Endothelial cell of umbilical vein (primary cell): ENCODE measurements at regions of chr7 and their contacts with region 1.

Region 1: GRCh38 chr7:158740013-158740656 is 35.5 kb upstream of the NCAPG2 start:
- DNase-seq: peak; percentile 89
- H3K4me3 ChIP-seq: peak overlapping the region in 1 of 3 experiments; percentile 9
- H3K27ac ChIP-seq: peak overlapping the region; percentile 69
- H3K4me1 ChIP-seq: peaks cover 25% of the 10 kb centered on the region
- H3K27me3 ChIP-seq: no peaks in the 10 kb centered on the region
- CTCF ChIP-seq: no peak
- POLR2A ChIP-seq: no peak

Region 2: GRCh38 chr7:158704704-158705468 is 35.2 kb before region 1 on chr7 and contains the start of gene NCAPG2:
- CTCF ChIA-PET with region 1: interaction called, 9 read pairs
- POLR2A ChIA-PET with region 1: interaction called, 12 read pairs
- dilution Hi-C with region 1: no loop called
- intact Hi-C with region 1: loop called (anchors 1 kb)
- DNase-seq: peak; percentile 98
- H3K4me3 ChIP-seq: peak within 1 kb of the TSS; percentile 87 to 100 (median 89)
- H3K27ac ChIP-seq: peak within 1 kb of the TSS; percentile 78
- H3K4me1 ChIP-seq: peaks cover 24% of the 10 kb centered on the region
- H3K27me3 ChIP-seq: no peaks in the 10 kb centered on the region
- CTCF ChIP-seq: no peak
- POLR2A ChIP-seq: peak; percentile 45
- total RNA-seq, gene NCAPG2: 62.3 and 66.9 TPM in 2 replicates

Region 3: DNA sequence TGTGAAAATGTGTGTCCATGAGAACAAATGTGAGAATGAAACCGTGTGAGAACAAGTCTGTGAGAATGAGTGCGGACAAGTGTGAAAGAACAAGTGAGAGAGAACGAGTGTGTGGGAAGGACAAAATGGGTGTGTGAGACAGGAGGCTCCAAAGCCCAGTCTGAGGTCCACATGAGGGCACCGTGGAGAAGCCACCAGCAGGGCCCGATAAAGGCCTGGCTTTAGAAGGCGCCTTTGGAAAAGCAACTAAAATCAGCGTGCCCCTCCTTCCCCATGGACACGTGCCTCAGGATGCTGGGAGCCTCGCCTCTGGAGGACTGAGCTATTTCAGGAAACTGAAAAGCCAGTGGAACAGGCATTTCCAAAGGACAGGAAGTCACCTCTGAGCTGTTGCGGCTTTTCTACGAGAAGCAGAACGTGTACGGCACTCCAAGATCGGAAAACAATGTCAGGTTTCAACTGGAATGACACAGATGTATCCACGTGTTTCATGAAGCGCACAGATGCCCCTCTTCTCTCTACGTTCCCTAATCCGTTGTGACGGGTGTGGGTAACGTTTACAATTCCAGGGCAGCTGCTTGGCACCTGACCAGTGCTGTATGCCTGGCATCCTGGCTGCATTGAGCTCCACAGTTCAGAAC is 42.7 kb after region 1 on chr7:
- CTCF ChIA-PET with region 1: interaction called, 9 read pairs
- POLR2A ChIA-PET with region 1: no interaction called
- dilution Hi-C with region 1: no loop called
- intact Hi-C with region 1: loop called (anchors 2 kb)
- DNase-seq: peak; percentile 80
- H3K4me3 ChIP-seq: no peak overlapping the region
- H3K27ac ChIP-seq: peak overlapping the region; percentile 4
- H3K4me1 ChIP-seq: peaks cover 12% of the 10 kb centered on the region
- H3K27me3 ChIP-seq: no peaks in the 10 kb centered on the region
- CTCF ChIP-seq: peak; percentile 48 to 53
- POLR2A ChIP-seq: no peak

Region 4: GRCh38 chr7:158818325-158819213 is 78.4 kb after region 1 on chr7:
- CTCF ChIA-PET with region 1: interaction called, 5 read pairs
- POLR2A ChIA-PET with region 1: no interaction called
- dilution Hi-C with region 1: no loop called
- intact Hi-C with region 1: loop called (anchors 1 kb)
- DNase-seq: peak; percentile 98
- H3K4me3 ChIP-seq: peak overlapping the region in 1 of 3 experiments; percentile 55
- H3K27ac ChIP-seq: peak overlapping the region; percentile 95
- H3K4me1 ChIP-seq: peaks cover 62% of the 10 kb centered on the region
- H3K27me3 ChIP-seq: no peaks in the 10 kb centered on the region
- CTCF ChIP-seq: no peak
- POLR2A ChIP-seq: peak; percentile 69

Region 5: DNA sequence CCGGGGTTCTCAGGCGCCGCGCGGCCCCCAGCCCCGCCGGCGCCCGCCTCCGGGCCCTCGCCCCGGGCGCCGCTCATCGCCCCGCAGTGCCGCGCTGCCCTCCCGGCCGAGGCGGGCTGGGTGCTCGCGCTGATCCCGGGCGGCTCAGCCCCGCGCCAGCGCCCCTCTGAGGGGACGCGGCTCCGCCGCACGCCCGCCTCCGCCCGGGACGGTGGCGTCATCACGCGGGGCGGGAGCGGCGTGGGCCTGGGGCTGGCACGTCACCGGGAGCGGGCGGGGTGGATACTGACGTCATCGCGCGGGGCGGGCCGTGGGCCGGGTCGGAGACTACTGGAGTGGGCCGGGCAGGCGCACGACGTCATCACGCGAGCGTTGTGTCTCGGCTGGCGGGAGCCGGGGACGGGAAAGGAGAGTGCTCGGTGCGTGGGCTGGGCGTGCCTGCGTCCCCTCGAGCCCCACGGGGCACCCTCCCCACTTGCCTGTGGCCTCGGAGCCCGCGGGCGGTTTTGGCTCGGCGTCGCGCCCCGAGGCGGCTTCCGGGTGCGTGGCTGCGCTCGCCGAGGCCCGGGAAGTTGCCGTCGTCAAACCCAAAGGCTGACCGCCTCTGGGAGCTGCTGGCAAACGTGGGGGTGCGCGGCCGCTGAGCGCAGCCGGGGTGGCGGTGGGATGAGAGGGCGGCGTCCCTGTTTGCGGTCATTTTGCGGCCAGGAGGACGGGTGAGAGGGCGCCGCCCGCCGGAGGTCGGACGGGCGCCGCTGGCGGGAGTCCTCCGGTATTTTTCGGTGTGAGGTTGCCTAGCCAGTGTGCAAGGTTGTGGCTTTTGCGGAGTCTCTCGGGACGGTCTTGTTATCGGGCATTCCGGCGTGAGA is 89.4 kb after region 1 on chr7 and contains the start of gene ESYT2:
- CTCF ChIA-PET with region 1: interaction called, 7 read pairs
- POLR2A ChIA-PET with region 1: no interaction called
- dilution Hi-C with region 1: no loop called
- intact Hi-C with region 1: loop called (anchors 1 kb)
- DNase-seq: peak; percentile 97
- H3K4me3 ChIP-seq: peak within 1 kb of the TSS; percentile 72 to 99 (median 80)
- H3K27ac ChIP-seq: peak within 1 kb of the TSS; percentile 66
- H3K4me1 ChIP-seq: peaks cover 10% of the 10 kb centered on the region
- H3K27me3 ChIP-seq: peaks cover 0 to 1% of the 10 kb centered on the region in 2 experiments
- CTCF ChIP-seq: peak in 1 of 2 donors; percentile 22
- POLR2A ChIP-seq: peak; percentile 92
- total RNA-seq, gene ESYT2: 40.6 and 46.6 TPM in 2 replicates

Region 6: GRCh38 chr7:158856883-158857668 is 116.9 kb after region 1 on chr7:
- CTCF ChIA-PET with region 1: interaction called, 3 read pairs
- POLR2A ChIA-PET with region 1: no interaction called
- dilution Hi-C with region 1: no loop called
- intact Hi-C with region 1: loop called (anchors 1 kb)
- DNase-seq: peak; percentile 19
- H3K4me3 ChIP-seq: peak overlapping the region; percentile 38 to 77 (median 63)
- H3K27ac ChIP-seq: no peak overlapping the region
- H3K4me1 ChIP-seq: peaks cover 12% of the 10 kb centered on the region
- H3K27me3 ChIP-seq: no peaks in the 10 kb centered on the region
- CTCF ChIP-seq: no peak
- POLR2A ChIP-seq: no peak

Region 7: GRCh38 chr7:158863611-158864506 is 123.7 kb after region 1 on chr7:
- CTCF ChIA-PET with region 1: interaction called, 5 read pairs
- POLR2A ChIA-PET with region 1: no interaction called
- dilution Hi-C with region 1: no loop called
- intact Hi-C with region 1: loop called (anchors 1 kb)
- DNase-seq: peak; percentile 41
- H3K4me3 ChIP-seq: peak overlapping the region; percentile 4 to 54 (median 33)
- H3K27ac ChIP-seq: no peak overlapping the region
- H3K4me1 ChIP-seq: peaks cover 4% of the 10 kb centered on the region
- H3K27me3 ChIP-seq: no peaks in the 10 kb centered on the region
- CTCF ChIP-seq: no peak
- POLR2A ChIP-seq: no peak